ENCODE measurements at regions of chr7 and their contacts with region 1.

Region 1: GRCh38 chr7:142833174-142834048 is 21.5 kb upstream of the EPHB6 start:
- DNase-seq: no peak
- ATAC-seq: peak in 1 of 3 donors; percentile 3
- H3K4me3 ChIP-seq: no peak overlapping the region
- H3K4me3 Mint-ChIP-seq: no peak overlapping the region
- H3K27ac ChIP-seq: no peak overlapping the region
- H3K27ac Mint-ChIP-seq: no peak overlapping the region
- H3K4me1 ChIP-seq: no peaks in the 10 kb centered on the region
- H3K4me1 Mint-ChIP-seq: no peaks in the 10 kb centered on the region
- H3K27me3 ChIP-seq: no peaks in the 10 kb centered on the region
- H3K27me3 Mint-ChIP-seq: peaks cover 4 to 17% of the 10 kb centered on the region in 2 donors
- CTCF ChIP-seq: no peak

Region 2: DNA sequence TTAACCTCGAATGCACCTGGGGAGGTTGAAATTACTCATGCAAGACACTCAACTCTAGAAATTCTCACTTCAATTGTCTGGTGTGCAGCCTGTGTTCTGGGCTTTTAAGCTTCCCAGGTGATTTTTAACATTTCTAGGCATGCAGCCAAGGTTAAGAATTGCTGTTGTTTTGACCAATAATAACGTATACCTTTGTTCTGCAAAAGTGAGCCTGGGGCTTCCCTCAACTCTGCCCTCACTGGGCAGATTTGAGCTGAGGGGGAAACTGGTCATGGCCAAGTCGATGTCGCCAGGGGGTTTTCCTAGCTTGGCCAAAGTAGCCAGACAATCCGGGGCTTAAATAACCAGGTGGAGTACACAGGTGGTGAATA is 62.1 kb before region 1 on chr7:
- intact Hi-C with region 1: loop called (anchors 10 kb)
- DNase-seq: no peak
- ATAC-seq: no peak
- H3K4me3 ChIP-seq: no peak overlapping the region
- H3K4me3 Mint-ChIP-seq: no peak overlapping the region
- H3K27ac ChIP-seq: no peak overlapping the region
- H3K27ac Mint-ChIP-seq: peak overlapping the region in 1 of 2 donors; percentile 7
- H3K4me1 ChIP-seq: peaks cover 5% of the 10 kb centered on the region
- H3K4me1 Mint-ChIP-seq: peaks cover 59 to 65% of the 10 kb centered on the region in 2 donors
- H3K27me3 ChIP-seq: no peaks in the 10 kb centered on the region
- H3K27me3 Mint-ChIP-seq: no peaks in the 10 kb centered on the region
- CTCF ChIP-seq: no peak

Region 3: DNA sequence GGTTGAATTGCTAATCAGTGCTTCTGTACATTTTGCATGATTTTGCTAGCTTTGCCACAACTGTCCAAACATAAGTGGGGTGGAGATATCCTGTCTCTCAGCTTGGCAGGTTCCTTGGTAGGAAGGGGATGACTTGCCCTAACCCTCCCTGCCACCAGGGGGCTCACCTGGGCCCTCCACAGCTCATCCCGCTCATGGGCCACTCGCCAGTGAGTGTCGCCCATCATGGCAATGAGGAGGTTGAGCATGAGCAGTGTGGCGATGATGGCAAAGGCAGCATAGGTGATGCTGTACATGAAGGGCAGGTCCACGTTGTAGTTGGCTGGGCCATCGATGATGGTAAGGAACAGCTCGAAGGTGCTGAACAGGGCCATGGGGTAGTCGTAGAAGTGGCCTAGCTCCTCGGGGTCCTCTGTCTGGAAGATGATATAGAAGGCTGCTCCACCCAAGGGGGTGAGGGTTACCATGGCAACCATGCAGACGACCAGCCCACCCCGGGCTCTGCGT is 39.9 kb after region 1 on chr7:
- intact Hi-C with region 1: no loop called
- DNase-seq: peak in 1 of 2 donors; percentile 43
- ATAC-seq: peak in 1 of 3 donors; percentile 33
- H3K4me3 ChIP-seq: no peak overlapping the region
- H3K4me3 Mint-ChIP-seq: no peak overlapping the region
- H3K27ac ChIP-seq: no peak overlapping the region
- H3K27ac Mint-ChIP-seq: no peak overlapping the region
- H3K4me1 ChIP-seq: no peaks in the 10 kb centered on the region
- H3K4me1 Mint-ChIP-seq: no peaks in the 10 kb centered on the region
- H3K27me3 ChIP-seq: no peaks in the 10 kb centered on the region
- H3K27me3 Mint-ChIP-seq: peaks cover 0 to 5% of the 10 kb centered on the region in 2 donors
- CTCF ChIP-seq: no peak